Activated CD4-positive, alpha-beta memory T cell treated with anti-CD3 and anti-CD28 coated beads for 36 hours (primary cell): ENCODE measurements at regions of chr10 and their contacts with region 1.

Region 1: DNA sequence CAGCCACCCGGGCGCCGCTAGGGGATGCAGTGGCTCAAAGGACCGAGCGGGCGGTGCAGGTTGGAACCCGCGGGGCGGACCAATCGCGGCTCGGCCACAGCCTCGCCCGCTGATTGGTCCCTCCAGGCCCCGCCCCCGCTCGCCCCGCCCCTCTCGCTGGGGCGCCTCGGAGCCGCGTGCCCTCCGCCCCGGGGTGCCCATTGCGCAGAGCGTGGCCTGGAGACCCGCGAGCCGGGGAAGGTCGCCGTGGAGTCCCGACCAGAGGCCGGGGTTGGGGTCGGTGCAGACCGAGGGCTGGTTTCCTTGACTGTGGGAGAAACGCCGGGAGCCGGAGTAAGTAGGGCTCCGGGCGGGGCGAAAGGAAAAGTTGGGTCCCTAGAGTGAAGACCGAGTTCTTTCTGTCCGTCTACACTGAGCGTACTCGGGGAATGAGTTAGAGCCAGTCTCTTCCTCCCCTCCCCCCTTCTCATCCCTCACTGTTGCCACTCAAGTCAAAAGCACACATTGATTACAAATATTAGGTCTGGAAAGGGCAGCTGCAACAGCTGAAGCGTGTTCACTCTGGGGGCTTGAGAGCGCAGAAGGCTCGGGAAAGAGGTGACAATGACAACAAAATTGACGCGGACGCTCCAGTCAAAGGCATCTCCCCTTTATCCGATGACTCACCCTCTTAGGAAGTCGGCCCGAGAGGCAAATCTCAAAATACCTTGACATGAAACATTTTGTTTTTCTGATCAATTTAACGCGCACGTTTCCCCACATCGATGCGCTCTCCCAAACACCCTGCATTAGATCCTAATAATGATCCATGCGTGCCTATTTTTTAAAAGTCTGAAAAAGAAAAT is 820 bp upstream of the GATA3 start:
- DNase-seq: peak; percentile 96
- H3K4me3 Mint-ChIP-seq: peak overlapping the region; percentile 99
- H3K27ac Mint-ChIP-seq: peak overlapping the region; percentile 99
- H3K4me1 Mint-ChIP-seq: peaks cover 29% of the 10 kb centered on the region
- H3K27me3 Mint-ChIP-seq: peaks cover 21% of the 10 kb centered on the region

Region 2: DNA sequence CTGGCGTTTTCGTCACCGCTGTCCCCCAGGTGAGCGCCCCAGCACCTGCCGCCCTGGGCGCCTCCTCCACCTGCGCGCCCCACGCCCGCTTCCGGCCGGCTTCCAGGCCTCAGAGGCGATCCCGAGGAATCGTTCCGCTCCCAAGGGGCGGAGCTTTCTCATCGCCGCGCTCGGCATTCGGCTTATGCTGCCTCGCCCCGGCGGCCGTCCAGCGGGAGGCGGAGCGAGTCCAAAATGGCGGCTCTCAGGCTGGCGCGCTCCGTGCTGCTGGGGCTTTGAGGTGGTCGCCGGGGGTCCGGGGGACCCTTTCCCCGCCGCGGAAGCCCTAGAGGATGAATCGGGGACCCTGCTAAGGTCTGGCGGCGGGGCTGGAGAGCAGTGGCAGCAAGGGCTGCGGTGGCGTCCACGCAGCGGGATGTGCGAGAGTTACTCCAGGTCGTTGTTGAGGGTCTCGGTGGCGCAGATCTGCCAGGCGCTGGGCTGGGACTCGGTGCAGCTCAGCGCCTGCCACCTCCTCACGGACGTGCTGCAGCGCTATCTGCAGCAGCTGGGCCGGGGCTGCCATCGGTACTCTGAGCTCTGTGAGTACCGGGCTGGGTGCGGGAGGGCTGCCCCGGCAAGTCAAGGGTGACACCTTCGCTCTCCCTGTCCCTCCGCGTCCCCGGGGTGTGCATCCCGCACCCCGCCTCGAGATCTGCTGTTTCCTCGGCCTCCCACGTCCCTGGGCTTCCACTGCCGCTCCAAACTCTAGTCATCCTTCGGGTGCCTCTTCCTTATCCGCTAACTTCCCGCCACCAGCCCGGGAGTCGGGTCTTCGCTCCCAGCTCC is 235.2 kb before region 1 on chr10 and contains the start of gene TAF3:
- CTCF ChIA-PET with region 1: no interaction called
- POLR2A ChIA-PET with region 1: no interaction called
- intact Hi-C with region 1: loop called (anchors 5 kb)
- DNase-seq: peak; percentile 95
- H3K4me3 Mint-ChIP-seq: peak within 1 kb of the TSS; percentile 98
- H3K27ac Mint-ChIP-seq: peak within 1 kb of the TSS; percentile 70
- H3K4me1 Mint-ChIP-seq: peaks cover 36% of the 10 kb centered on the region
- H3K27me3 Mint-ChIP-seq: peaks cover 2% of the 10 kb centered on the region
- total RNA-seq, gene TAF3: 12.2 to 12.3 TPM

Region 3: GRCh38 chr10:7928536-7928935 is 125.1 kb before region 1 on chr10:
- CTCF ChIA-PET with region 1: no interaction called
- POLR2A ChIA-PET with region 1: no interaction called
- intact Hi-C with region 1: no loop called
- DNase-seq: no peak
- H3K4me3 Mint-ChIP-seq: no peak overlapping the region
- H3K27ac Mint-ChIP-seq: no peak overlapping the region
- H3K4me1 Mint-ChIP-seq: peaks cover 6% of the 10 kb centered on the region
- H3K27me3 Mint-ChIP-seq: no peaks in the 10 kb centered on the region

Region 4: GRCh38 chr10:8112226-8112905 is 58.7 kb after region 1 on chr10:
- CTCF ChIA-PET with region 1: no interaction called
- POLR2A ChIA-PET with region 1: no interaction called
- intact Hi-C with region 1: no loop called
- DNase-seq: no peak
- H3K4me3 Mint-ChIP-seq: no peak overlapping the region
- H3K27ac Mint-ChIP-seq: no peak overlapping the region
- H3K4me1 Mint-ChIP-seq: no peaks in the 10 kb centered on the region
- H3K27me3 Mint-ChIP-seq: no peaks in the 10 kb centered on the region

Region 5: DNA sequence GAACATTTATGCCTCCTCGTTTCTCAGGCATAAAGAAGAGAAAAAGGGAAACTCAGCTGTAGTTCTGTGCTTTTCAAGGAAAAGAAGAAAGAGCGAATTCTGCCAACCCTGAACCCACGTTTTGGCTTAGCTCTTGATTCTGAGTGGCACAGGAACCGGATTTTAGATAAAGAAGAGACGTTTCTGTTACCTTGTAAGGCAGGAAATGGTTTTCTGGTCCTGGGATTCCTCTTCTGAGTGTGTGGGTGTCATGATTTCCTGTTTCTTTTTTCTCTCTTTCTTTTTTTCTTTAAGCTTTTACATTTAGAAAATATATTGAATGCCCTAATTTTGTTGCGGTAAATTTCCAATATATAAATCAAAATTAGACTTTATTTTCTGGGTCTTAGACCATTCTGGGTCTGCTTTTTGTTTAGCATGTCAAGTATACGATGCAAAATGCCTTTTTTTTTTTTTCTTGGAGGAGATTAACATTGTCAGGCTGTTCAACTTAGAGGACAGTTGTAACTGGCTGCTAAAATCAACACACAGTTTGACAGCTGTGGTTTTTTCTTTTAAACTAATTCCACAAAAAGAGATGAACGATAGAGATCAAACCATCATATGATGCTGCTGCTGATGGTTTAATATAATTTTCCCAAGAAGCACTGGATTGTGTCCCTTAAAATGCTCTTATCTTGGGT is 191.6 kb after region 1 on chr10:
- CTCF ChIA-PET with region 1: no interaction called
- POLR2A ChIA-PET with region 1: no interaction called
- intact Hi-C with region 1: loop called (anchors 1 kb)
- DNase-seq: no peak
- H3K4me3 Mint-ChIP-seq: peak overlapping the region; percentile 18
- H3K27ac Mint-ChIP-seq: peak overlapping the region; percentile 82
- H3K4me1 Mint-ChIP-seq: peaks cover 51% of the 10 kb centered on the region
- H3K27me3 Mint-ChIP-seq: no peaks in the 10 kb centered on the region

Region 6: GRCh38 chr10:8315619-8316021 is 262.0 kb after region 1 on chr10:
- CTCF ChIA-PET with region 1: interaction called, 4 read pairs
- POLR2A ChIA-PET with region 1: no interaction called
- intact Hi-C with region 1: loop called (anchors 2 kb)
- DNase-seq: peak; percentile 51
- H3K4me3 Mint-ChIP-seq: no peak overlapping the region
- H3K27ac Mint-ChIP-seq: peak overlapping the region; percentile 85
- H3K4me1 Mint-ChIP-seq: peaks cover 41% of the 10 kb centered on the region
- H3K27me3 Mint-ChIP-seq: peaks cover 4% of the 10 kb centered on the region

Region 7: GRCh38 chr10:8379906-8380832 is 326.5 kb after region 1 on chr10:
- CTCF ChIA-PET with region 1: no interaction called
- POLR2A ChIA-PET with region 1: no interaction called
- intact Hi-C with region 1: no loop called
- DNase-seq: no peak
- H3K4me3 Mint-ChIP-seq: no peak overlapping the region
- H3K27ac Mint-ChIP-seq: no peak overlapping the region
- H3K4me1 Mint-ChIP-seq: peaks cover 2% of the 10 kb centered on the region
- H3K27me3 Mint-ChIP-seq: no peaks in the 10 kb centered on the region

Region 8: GRCh38 chr10:8577686-8578085 is 524.0 kb after region 1 on chr10:
- CTCF ChIA-PET with region 1: no interaction called
- POLR2A ChIA-PET with region 1: no interaction called
- intact Hi-C with region 1: loop called (anchors 5 kb)
- DNase-seq: peak; percentile 38
- H3K4me3 Mint-ChIP-seq: peak overlapping the region; percentile 13
- H3K27ac Mint-ChIP-seq: peak overlapping the region; percentile 74
- H3K4me1 Mint-ChIP-seq: peaks cover 49% of the 10 kb centered on the region
- H3K27me3 Mint-ChIP-seq: peaks cover 26% of the 10 kb centered on the region

Region 9: GRCh38 chr10:8990280-8990987 is 936.8 kb after region 1 on chr10:
- CTCF ChIA-PET with region 1: no interaction called
- POLR2A ChIA-PET with region 1: no interaction called
- intact Hi-C with region 1: loop called (anchors 5 kb)
- DNase-seq: no peak
- H3K4me3 Mint-ChIP-seq: no peak overlapping the region
- H3K27ac Mint-ChIP-seq: peak overlapping the region; percentile 35
- H3K4me1 Mint-ChIP-seq: peaks cover 55% of the 10 kb centered on the region
- H3K27me3 Mint-ChIP-seq: no peaks in the 10 kb centered on the region

Region 10: GRCh38 chr10:9302120-9302746 is 1248.6 kb after region 1 on chr10:
- CTCF ChIA-PET with region 1: no interaction called
- POLR2A ChIA-PET with region 1: no interaction called
- intact Hi-C with region 1: loop called (anchors 5 kb)
- DNase-seq: no peak
- H3K4me3 Mint-ChIP-seq: no peak overlapping the region
- H3K27ac Mint-ChIP-seq: no peak overlapping the region
- H3K4me1 Mint-ChIP-seq: no peaks in the 10 kb centered on the region
- H3K27me3 Mint-ChIP-seq: peaks cover 7% of the 10 kb centered on the region